ENCODE measurements at regions of chr11 and their contacts with region 1.

Region 1: GRCh38 chr11:64916775-64917662 is at the start of gene ATG2A:
- DNase-seq: peak; percentile 99
- H3K4me3 Mint-ChIP-seq: peak within 1 kb of the TSS; percentile 88
- H3K27ac Mint-ChIP-seq: peak within 1 kb of the TSS; percentile 82
- H3K4me1 Mint-ChIP-seq: peaks cover 20% of the 10 kb centered on the region
- H3K27me3 Mint-ChIP-seq: no peaks in the 10 kb centered on the region
- total RNA-seq, gene ATG2A: 24.6 and 24.9 TPM in 2 replicates

Region 2: GRCh38 chr11:64778508-64779346 is 138.3 kb before region 1 on chr11 and contains the start of gene SF1:
- intact Hi-C with region 1: loop called (anchors 1 kb)
- DNase-seq: peak; percentile 99
- H3K4me3 Mint-ChIP-seq: peak within 1 kb of the TSS; percentile 87
- H3K27ac Mint-ChIP-seq: peak within 1 kb of the TSS; percentile 97
- H3K4me1 Mint-ChIP-seq: peaks cover 57% of the 10 kb centered on the region
- H3K27me3 Mint-ChIP-seq: peaks cover 2% of the 10 kb centered on the region
- total RNA-seq, gene SF1: 518 and 538 TPM in 2 replicates

Region 3: DNA sequence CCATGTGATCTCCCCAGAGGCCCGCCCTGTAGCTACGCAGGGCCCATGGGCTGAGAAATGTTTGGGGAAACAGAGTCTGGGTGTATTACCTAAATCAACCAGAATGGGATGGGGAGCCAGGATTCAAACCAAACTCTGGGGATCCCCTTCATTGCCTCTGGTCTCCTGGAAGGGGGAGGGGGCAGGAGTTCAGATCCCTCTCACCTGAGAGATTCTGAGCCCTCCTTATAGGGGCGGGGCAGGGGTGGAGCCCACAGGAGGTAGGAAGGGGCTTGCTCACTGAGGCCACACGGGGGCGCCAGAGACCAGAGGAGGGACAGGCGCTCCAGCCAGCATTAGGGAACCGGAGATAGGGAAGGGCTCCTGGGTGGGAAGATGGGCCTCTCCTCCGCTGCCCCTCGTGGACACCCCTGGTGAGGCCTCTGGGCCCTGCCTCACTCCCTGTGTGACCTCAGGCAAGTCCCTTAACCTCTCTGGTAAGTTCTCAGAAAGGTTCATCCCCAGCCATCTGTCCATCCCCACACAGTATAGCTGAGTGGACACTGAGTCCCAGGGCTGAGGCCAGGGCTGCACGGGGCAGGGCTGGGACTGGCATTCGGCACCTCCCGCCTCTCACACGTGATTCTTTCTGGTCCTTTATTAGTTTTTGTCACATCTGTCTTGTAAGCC is 69.9 kb before region 1 on chr11:
- intact Hi-C with region 1: loop called (anchors 1 kb)
- DNase-seq: peak; percentile 83
- H3K4me3 Mint-ChIP-seq: no peak overlapping the region
- H3K27ac Mint-ChIP-seq: no peak overlapping the region
- H3K4me1 Mint-ChIP-seq: peaks cover 32% of the 10 kb centered on the region
- H3K27me3 Mint-ChIP-seq: peaks cover 2% of the 10 kb centered on the region

Region 4: GRCh38 chr11:64900263-64900678 is 16.7 kb before region 1 on chr11:
- intact Hi-C with region 1: loop called (anchors 1 kb)
- DNase-seq: peak; percentile 69
- H3K4me3 Mint-ChIP-seq: peak overlapping the region; percentile 66
- H3K27ac Mint-ChIP-seq: peak overlapping the region; percentile 86
- H3K4me1 Mint-ChIP-seq: peaks cover 12% of the 10 kb centered on the region
- H3K27me3 Mint-ChIP-seq: no peaks in the 10 kb centered on the region

Region 5: GRCh38 chr11:65027213-65028067 is 110.4 kb after region 1 on chr11 and contains the start of gene SNX15:
- intact Hi-C with region 1: loop called (anchors 1 kb)
- DNase-seq: peak; percentile 91
- H3K4me3 Mint-ChIP-seq: peak within 1 kb of the TSS; percentile 83
- H3K27ac Mint-ChIP-seq: peak within 1 kb of the TSS; percentile 83
- H3K4me1 Mint-ChIP-seq: peaks cover 23% of the 10 kb centered on the region
- H3K27me3 Mint-ChIP-seq: no peaks in the 10 kb centered on the region
- total RNA-seq, gene SNX15: 19.9 and 30.9 TPM in 2 replicates

Region 6: GRCh38 chr11:65095974-65096806 is 179.2 kb after region 1 on chr11 and contains the start of gene VPS51:
- intact Hi-C with region 1: loop called (anchors 1 kb)
- DNase-seq: peak; percentile 80
- H3K4me3 Mint-ChIP-seq: peak within 1 kb of the TSS; percentile 91
- H3K27ac Mint-ChIP-seq: peak within 1 kb of the TSS; percentile 94
- H3K4me1 Mint-ChIP-seq: peaks cover 11% of the 10 kb centered on the region
- H3K27me3 Mint-ChIP-seq: no peaks in the 10 kb centered on the region
- total RNA-seq, gene VPS51: 137 and 139 TPM in 2 replicates

Region 7: GRCh38 chr11:65150509-65151271 is 233.7 kb after region 1 on chr11:
- intact Hi-C with region 1: no loop called
- DNase-seq: no peak
- H3K4me3 Mint-ChIP-seq: no peak overlapping the region
- H3K27ac Mint-ChIP-seq: no peak overlapping the region
- H3K4me1 Mint-ChIP-seq: peaks cover 12% of the 10 kb centered on the region
- H3K27me3 Mint-ChIP-seq: peaks cover 9% of the 10 kb centered on the region

Region 8: GRCh38 chr11:65569973-65570918 is 653.2 kb after region 1 on chr11 and contains the start of gene ZNRD2:
- intact Hi-C with region 1: loop called (anchors 5 kb)
- DNase-seq: peak; percentile 99
- H3K4me3 Mint-ChIP-seq: peak within 1 kb of the TSS; percentile 99
- H3K27ac Mint-ChIP-seq: peak within 1 kb of the TSS; percentile 98
- H3K4me1 Mint-ChIP-seq: peaks cover 64% of the 10 kb centered on the region
- H3K27me3 Mint-ChIP-seq: no peaks in the 10 kb centered on the region
- total RNA-seq, gene ZNRD2: 94.6 and 96.9 TPM in 2 replicates